CD4-positive, alpha-beta T cell (primary cell): ENCODE measurements at regions of chr19 and their contacts with region 1.

Region 1: GRCh38 chr19:56252699-56253422 is 19.7 kb upstream of the EDDM13 start:
- DNase-seq: peak; percentile 43 to 79 (median 60)
- ATAC-seq: peak; percentile 80
- H3K4me3 ChIP-seq: no peak overlapping the region
- H3K4me3 Mint-ChIP-seq: no peak overlapping the region
- H3K27ac ChIP-seq: no peak overlapping the region
- H3K27ac Mint-ChIP-seq: no peak overlapping the region
- H3K4me1 ChIP-seq: peaks cover 3% of the 10 kb centered on the region
- H3K4me1 Mint-ChIP-seq: no peaks in the 10 kb centered on the region
- H3K27me3 ChIP-seq: no peaks in the 10 kb centered on the region
- H3K27me3 Mint-ChIP-seq: no peaks in the 10 kb centered on the region
- CTCF ChIP-seq: peak; percentile 58

Region 2: GRCh38 chr19:56333505-56333904 is 80.6 kb after region 1 on chr19:
- CTCF ChIA-PET with region 1: interaction called, 17 read pairs
- POLR2A ChIA-PET with region 1: interaction called, 5 read pairs
- intact Hi-C with region 1: loop called (anchors 5 kb)
- DNase-seq: peak in 8 of 14 experiments; percentile 12 to 73 (median 30)
- ATAC-seq: no peak
- H3K4me3 ChIP-seq: no peak overlapping the region
- H3K4me3 Mint-ChIP-seq: no peak overlapping the region
- H3K27ac ChIP-seq: no peak overlapping the region
- H3K27ac Mint-ChIP-seq: no peak overlapping the region
- H3K4me1 ChIP-seq: no peaks in the 10 kb centered on the region
- H3K4me1 Mint-ChIP-seq: no peaks in the 10 kb centered on the region
- H3K27me3 ChIP-seq: no peaks in the 10 kb centered on the region
- H3K27me3 Mint-ChIP-seq: peaks cover 13% of the 10 kb centered on the region
- CTCF ChIP-seq: peak; percentile 65

Region 3: GRCh38 chr19:57103573-57104277 is 850.9 kb after region 1 on chr19:
- CTCF ChIA-PET with region 1: no interaction called
- POLR2A ChIA-PET with region 1: no interaction called
- intact Hi-C with region 1: loop called in 1 of 2 experiments (anchors 5 kb)
- DNase-seq: peak; percentile 2 to 76 (median 42)
- ATAC-seq: peak; percentile 72
- H3K4me3 ChIP-seq: no peak overlapping the region
- H3K4me3 Mint-ChIP-seq: peak overlapping the region; percentile 8
- H3K27ac ChIP-seq: no peak overlapping the region
- H3K27ac Mint-ChIP-seq: no peak overlapping the region
- H3K4me1 ChIP-seq: peaks cover 10% of the 10 kb centered on the region
- H3K4me1 Mint-ChIP-seq: peaks cover 5% of the 10 kb centered on the region
- H3K27me3 ChIP-seq: peaks cover 8 to 14% of the 10 kb centered on the region in 2 experiments
- H3K27me3 Mint-ChIP-seq: peaks cover 5% of the 10 kb centered on the region
- CTCF ChIP-seq: peak; percentile 62